ENCODE measurements at regions of chr17 and their contacts with region 1.

Region 1: GRCh38 chr17:75319904-75320691 is 30.9 kb upstream of the SLC25A19 start:
- DNase-seq: peak; percentile 75
- CTCF ChIP-seq: no peak

Region 2: DNA sequence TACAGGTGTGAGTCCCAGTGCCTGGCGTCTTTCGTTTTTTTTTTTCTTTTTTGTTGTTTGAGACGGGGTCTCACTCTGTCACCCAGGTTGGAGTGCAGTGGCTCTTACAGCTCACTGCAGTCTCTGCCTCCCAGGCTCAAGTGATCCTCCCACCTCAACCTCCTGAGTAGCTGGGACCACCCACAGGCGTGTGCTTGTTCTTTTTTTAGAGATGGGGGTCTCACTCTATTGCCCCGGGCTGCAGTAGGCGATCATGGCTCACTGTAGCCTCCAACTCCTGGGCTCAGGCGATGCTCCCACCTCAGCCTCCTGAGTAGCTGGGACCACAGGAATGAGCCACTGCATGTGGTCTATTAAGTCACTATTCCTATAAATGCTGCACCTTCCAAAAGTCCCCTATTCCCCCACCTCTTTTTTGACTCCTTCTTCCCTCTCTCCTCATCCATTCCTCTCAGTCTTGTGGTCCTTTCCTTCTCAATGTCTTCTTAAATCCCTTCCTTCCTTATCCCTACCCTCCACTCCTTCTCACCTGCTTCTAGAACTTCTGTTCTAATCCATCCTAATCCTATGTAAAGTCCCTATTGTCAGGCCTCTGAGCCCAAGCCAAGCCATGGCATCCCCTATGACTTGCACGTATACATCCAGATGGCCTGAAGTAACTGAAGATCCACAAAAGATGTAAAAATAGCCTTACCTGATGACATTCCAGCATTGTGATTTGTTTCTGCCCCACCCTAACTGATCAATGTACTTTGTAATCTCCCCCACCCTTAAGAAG is 67.9 kb before region 1 on chr17:
- CTCF ChIA-PET with region 1: no interaction called
- POLR2A ChIA-PET with region 1: no interaction called
- DNase-seq: no peak
- CTCF ChIP-seq: no peak

Region 3: GRCh38 chr17:75271233-75271954 is 48.7 kb before region 1 on chr17:
- CTCF ChIA-PET with region 1: interaction called, 11 read pairs
- POLR2A ChIA-PET with region 1: interaction called, 5 read pairs
- DNase-seq: peak; percentile 96
- CTCF ChIP-seq: peak; percentile 96

Region 4: DNA sequence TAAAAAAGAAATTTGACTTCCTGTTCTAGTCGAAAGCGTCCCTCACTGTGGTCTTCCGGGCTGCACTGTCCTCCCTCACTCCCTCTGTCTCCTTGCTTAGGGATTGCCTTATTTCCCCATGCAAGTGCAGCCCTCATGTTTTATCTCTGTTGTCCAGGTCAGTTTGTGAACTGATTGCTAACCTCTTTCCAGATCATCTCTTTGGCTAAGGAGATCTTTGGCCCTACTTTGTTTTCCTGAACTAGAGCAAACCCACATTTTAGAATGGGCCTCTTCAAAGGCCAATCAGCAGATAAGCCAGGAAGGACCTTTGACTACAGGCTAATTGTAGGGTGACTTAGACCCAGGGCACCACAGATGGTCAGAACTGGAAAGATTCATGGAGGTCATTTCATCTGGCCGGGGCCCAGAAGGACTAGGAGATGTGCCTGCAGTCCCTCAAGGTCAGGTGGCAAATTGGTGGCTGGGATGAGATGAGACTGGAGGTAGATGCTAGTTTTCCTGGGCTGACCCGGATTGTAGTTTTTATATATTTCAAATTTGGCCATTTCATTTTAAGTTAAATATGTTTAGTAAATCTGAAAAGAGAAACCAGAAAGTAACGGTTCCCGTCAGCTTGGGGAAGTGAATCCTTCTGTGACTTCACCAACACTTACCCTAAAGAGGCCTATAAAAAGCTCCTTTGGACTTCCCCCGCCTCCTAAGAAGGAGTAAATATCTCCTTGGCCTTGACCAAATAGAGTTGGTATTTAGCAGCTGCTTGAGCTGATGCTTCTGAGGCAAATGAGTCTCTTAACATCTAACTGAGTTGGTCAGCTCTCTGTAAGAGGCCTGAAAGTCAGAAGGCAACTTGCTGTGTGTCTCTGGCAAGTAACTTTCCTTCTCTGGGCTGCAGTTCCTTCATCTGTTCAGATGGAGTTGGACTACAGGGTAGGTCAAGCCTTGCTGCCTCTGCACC is 24.6 kb before region 1 on chr17:
- CTCF ChIA-PET with region 1: interaction called, 33 read pairs
- POLR2A ChIA-PET with region 1: interaction called, 14 read pairs
- DNase-seq: peak; percentile 72
- CTCF ChIP-seq: no peak

Region 5: DNA sequence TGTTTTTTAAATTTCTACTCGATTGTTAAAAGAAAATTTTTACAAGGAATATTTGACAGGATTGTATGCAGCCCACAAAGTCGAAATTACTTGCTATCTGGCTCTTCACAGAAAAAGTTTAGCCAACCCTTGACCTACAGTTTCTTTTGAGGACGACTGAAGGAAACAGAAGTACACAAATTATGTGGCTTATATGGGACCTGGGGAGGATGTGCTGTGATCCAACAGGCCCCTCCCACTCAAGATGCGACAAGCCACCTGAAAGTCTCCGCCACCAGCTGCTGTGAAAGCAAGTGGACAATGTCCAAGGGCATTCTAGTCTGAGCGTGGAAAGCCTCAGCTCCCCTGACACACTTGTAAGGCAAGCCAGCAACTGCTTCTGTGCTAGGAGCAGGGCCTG is 11.6 kb after region 1 on chr17:
- CTCF ChIA-PET with region 1: interaction called, 34 read pairs
- POLR2A ChIA-PET with region 1: interaction called, 8 read pairs
- DNase-seq: no peak
- CTCF ChIP-seq: no peak

Region 6: GRCh38 chr17:75345514-75346167 is 25.5 kb after region 1 on chr17:
- CTCF ChIA-PET with region 1: interaction called, 53 read pairs
- POLR2A ChIA-PET with region 1: interaction called, 7 read pairs
- DNase-seq: peak; percentile 71
- CTCF ChIP-seq: no peak

Region 7: DNA sequence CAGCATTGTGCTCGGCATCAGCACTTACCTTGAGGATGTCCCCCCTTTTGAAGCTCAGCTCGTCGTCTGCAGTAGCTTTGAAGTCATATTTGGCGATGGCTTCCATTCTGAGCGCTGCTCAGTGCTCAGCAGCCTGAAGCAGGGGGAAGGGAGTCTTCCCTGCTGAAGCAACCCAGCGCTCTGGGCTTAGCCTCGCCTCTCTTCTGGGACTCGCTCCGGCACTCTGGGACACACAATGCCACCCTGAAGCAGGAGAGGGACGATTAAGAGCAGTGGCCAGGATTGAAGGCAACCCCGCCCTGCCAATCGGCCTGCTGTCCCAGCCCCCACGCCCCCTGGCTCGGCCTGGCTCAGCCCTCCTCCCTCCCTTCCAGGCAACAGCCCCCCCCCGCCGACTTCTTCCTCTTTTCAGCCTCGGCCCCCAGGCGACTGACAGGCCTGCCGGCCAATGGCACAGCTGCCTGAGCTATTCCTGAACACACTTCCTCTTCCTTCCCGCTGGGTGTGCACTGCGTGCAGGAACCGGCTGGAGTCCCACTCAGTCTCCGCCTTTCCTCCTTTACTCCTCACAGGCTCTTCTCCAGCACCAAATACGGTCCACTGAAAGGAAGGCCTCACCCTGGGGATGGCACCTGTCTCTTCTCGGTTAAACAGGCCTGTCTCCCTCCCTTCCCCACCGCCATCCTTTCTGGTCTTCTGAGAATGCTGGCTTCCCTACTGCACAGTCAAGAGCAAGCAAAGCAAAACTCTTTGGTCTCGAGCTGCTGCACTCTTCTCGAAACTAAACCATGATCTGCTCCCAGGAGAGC is 73.6 kb after region 1 on chr17:
- CTCF ChIA-PET with region 1: interaction called, 21 read pairs
- POLR2A ChIA-PET with region 1: interaction called, 4 read pairs
- DNase-seq: peak; percentile 91
- CTCF ChIP-seq: no peak

Region 8: GRCh38 chr17:75405365-75406221 is 85.5 kb after region 1 on chr17 and contains the start of gene GRB2:
- CTCF ChIA-PET with region 1: interaction called, 32 read pairs
- POLR2A ChIA-PET with region 1: interaction called, 9 read pairs
- DNase-seq: peak; percentile 99
- CTCF ChIP-seq: no peak

Region 9: DNA sequence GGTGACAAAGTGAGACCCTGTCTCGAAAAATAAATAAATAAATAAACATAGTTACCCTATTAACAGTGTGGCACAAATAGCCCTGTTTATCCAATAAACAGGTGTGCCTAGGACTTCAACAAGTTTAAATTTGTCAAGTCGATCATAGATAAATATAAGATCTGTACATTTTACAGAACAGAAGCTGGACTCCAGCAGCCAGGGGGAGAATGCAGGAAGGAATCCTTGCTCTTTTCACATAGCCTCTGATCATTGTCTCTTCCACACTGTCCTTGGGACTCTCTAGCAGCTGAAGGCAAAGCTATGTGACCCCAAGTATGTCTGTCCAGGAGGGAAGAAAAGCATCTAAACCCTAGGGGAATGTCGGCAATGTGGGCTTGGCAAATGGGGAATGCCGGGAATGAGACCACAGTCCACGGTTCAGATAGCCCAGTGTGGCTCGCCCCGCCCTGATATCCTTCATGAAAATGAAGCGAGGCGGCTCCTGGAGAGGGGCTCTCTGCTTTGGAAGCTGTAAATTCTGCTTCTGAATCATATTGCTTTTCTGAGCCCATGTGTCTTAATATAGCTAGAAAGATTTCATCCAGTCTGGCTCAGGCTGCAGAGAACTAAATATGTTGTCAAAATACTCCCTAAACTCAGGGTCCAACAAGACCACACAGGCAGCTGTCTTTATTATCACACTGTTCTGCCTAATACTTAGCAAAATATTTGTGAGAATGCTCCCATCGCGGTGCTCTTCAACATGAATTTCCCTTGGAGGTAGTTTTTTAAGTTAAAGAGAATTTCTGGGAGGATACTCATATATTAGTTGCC is 110.3 kb after region 1 on chr17:
- CTCF ChIA-PET with region 1: no interaction called
- POLR2A ChIA-PET with region 1: no interaction called
- DNase-seq: no peak
- CTCF ChIP-seq: no peak

Region 10: GRCh38 chr17:75440738-75441448 is 120.8 kb after region 1 on chr17:
- CTCF ChIA-PET with region 1: no interaction called
- POLR2A ChIA-PET with region 1: no interaction called
- DNase-seq: no peak
- CTCF ChIP-seq: no peak

Measured in GM10248 (cell line).